ENCODE measurements at regions of chr9 and their contacts with region 1.

Region 1: GRCh38 chr9:129726322-129727160 is 26.3 kb downstream of the PTGES start:
- DNase-seq: peak; percentile 55
- H3K4me3 ChIP-seq: no peak overlapping the region
- H3K27ac ChIP-seq: no peak overlapping the region
- H3K27me3 ChIP-seq: no peaks in the 10 kb centered on the region
- CTCF ChIP-seq: peak; percentile 96

Region 2: GRCh38 chr9:129702589-129703520 is 23.7 kb before region 1 on chr9:
- CTCF ChIA-PET with region 1: interaction called, 27 read pairs
- POLR2A ChIA-PET with region 1: interaction called, 5 read pairs
- DNase-seq: peak; percentile 69
- H3K4me3 ChIP-seq: no peak overlapping the region
- H3K27ac ChIP-seq: peak overlapping the region; percentile 70
- H3K27me3 ChIP-seq: no peaks in the 10 kb centered on the region
- CTCF ChIP-seq: no peak

Region 3: DNA sequence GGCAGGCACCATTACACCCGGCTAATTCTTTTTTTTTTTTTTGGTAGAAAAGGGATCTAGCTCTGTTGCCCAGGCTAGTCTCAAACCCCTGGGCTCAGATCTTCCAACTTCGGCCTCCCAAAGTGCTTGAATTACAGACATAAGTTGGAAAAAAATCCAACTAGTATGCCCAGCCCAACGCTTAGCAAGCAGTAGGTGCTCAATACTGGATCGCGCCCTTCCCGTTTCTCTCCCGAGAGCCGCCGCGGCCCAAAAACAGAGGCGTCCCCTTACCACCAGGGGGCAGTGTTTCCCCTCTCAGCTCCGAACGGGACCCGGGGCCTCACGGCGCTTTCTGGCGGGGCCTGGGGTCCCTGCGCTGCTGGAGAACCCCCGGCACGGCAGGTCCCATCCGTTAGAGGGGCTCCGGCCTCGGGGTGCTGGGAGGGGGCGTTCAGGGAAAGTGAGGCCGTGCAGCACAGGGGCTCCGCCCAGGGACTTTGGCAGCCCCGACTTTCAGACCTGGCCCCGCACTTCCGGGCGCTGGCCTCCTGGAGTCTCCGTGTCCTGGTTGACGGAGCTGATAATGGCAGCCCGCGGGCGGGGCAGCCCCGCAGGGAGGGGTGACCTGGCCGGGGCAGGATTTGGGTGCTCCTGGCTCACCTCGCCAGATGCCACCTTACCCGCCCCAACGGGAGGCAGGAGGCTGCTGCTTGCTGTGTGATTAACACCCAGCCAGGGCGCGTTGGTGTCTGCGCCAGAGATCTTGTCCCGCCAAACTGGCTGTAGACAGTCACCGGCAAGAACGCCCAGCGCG is 11.1 kb after region 1 on chr9:
- CTCF ChIA-PET with region 1: interaction called, 80 read pairs
- POLR2A ChIA-PET with region 1: interaction called, 7 read pairs
- DNase-seq: no peak
- H3K4me3 ChIP-seq: peak overlapping the region; percentile 57
- H3K27ac ChIP-seq: no peak overlapping the region
- H3K27me3 ChIP-seq: no peaks in the 10 kb centered on the region
- CTCF ChIP-seq: peak; percentile 92

Region 4: DNA sequence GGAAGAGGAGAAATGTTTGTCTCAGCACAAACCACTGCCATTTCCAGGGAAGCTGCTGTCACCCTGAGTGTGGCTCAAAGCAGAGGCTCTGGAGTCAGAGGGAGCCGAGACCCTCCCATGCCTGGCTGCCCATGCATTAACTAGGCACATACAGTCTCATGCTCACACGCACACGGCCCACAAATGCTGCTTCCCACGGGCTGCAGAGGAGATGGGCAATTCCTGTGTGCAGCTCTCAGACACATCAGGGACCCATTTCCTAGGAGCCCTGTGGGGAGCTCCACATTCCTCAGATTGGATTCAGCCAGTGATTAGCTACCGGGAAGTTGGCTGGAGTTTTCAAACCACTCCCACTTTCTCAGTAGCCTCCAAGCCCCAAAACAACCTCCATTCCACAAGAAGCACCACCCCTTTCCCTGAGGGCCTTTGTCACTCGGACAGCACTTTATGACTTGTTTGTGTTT is 35.4 kb after region 1 on chr9:
- CTCF ChIA-PET with region 1: interaction called, 10 read pairs
- POLR2A ChIA-PET with region 1: interaction called, 6 read pairs
- DNase-seq: peak; percentile 55
- H3K4me3 ChIP-seq: peak overlapping the region; percentile 34
- H3K27ac ChIP-seq: peak overlapping the region; percentile 97
- H3K27me3 ChIP-seq: no peaks in the 10 kb centered on the region
- CTCF ChIP-seq: no peak

Region 5: GRCh38 chr9:129783516-129784361 is 57.2 kb after region 1 on chr9:
- CTCF ChIA-PET with region 1: interaction called, 60 read pairs
- POLR2A ChIA-PET with region 1: no interaction called
- DNase-seq: peak; percentile 57
- H3K4me3 ChIP-seq: no peak overlapping the region
- H3K27ac ChIP-seq: no peak overlapping the region
- H3K27me3 ChIP-seq: peaks cover 4% of the 10 kb centered on the region
- CTCF ChIP-seq: peak; percentile 97